T-cell (primary cell): ENCODE measurements at regions of chr14 and their contacts with region 1.

Region 1: GRCh38 chr14:64959894-64960293 is 12.2 kb downstream of the RAB15 start:
- DNase-seq: no peak
- ATAC-seq: no peak
- H3K4me3 ChIP-seq: no peak overlapping the region
- H3K4me3 Mint-ChIP-seq: no peak overlapping the region
- H3K27ac ChIP-seq: no peak overlapping the region
- H3K27ac Mint-ChIP-seq: no peak overlapping the region
- H3K4me1 ChIP-seq: peaks cover 0 to 7% of the 10 kb centered on the region in 2 experiments
- H3K4me1 Mint-ChIP-seq: peaks cover 2 to 14% (median 2%) of the 10 kb centered on the region in 3 donors
- H3K27me3 ChIP-seq: no peaks in the 10 kb centered on the region
- H3K27me3 Mint-ChIP-seq: no peaks in the 10 kb centered on the region

Region 2: DNA sequence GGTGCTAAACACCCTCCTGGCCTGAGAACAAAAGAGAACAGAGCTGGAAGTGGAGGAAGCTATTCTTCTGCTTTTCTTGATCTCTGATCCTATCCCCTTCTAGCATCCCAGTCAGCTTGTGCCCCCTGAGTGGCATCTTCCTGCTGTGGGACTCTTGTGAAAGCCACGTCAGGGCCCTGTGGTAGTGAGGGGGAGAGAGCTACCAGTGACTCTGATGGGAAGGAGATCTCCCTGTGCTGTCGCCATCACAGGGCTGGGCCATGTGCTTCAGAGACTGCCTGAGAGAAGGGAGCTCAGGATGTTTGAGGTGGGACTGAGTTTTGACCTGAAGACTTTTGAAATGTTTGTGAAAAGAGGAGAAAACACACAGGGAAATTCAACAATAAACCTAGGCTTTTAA is 345.1 kb after region 1 on chr14:
- CTCF ChIA-PET with region 1: interaction called in 1 of 2 experiments, 12 read pairs
- POLR2A ChIA-PET with region 1: no interaction called
- DNase-seq: no peak
- ATAC-seq: no peak
- H3K4me3 ChIP-seq: no peak overlapping the region
- H3K4me3 Mint-ChIP-seq: no peak overlapping the region
- H3K27ac ChIP-seq: no peak overlapping the region
- H3K27ac Mint-ChIP-seq: peak overlapping the region; percentile 49 to 65
- H3K4me1 ChIP-seq: peaks cover 17 to 40% of the 10 kb centered on the region in 2 experiments
- H3K4me1 Mint-ChIP-seq: peaks cover 42 to 51% (median 49%) of the 10 kb centered on the region in 3 donors
- H3K27me3 ChIP-seq: no peaks in the 10 kb centered on the region
- H3K27me3 Mint-ChIP-seq: no peaks in the 10 kb centered on the region